ENCODE measurements at regions of chr2 and their contacts with region 1.

Region 1: DNA sequence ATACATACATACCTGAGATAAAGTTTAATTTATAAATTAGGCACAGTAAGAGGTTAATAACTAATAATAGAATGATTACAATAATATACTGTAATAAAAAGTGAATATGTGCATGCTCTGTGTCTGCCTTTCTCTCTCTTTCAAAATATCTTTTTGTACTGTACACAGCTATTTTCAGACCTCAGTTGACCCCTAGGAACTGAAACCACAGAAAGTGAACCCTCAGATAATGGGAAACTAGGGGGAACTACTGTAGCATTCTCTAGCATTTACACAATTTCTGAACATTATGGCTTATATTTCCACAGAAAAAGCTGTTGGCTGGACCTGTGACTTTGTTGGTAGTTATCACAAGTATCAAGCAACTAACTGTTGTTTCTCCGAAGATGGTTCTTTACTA is 25.9 kb downstream of the WDR75 start:
- DNase-seq: no peak
- H3K4me3 ChIP-seq: no peak overlapping the region
- H3K27ac ChIP-seq: no peak overlapping the region
- H3K4me1 ChIP-seq: no peaks in the 10 kb centered on the region
- H3K27me3 ChIP-seq: no peaks in the 10 kb centered on the region
- CTCF ChIP-seq: no peak
- EP300 ChIP-seq: no peak
- POLR2A ChIP-seq: no peak
- RAD21 ChIP-seq: no peak

Region 2: GRCh38 chr2:189454009-189454408 is 13.2 kb before region 1 on chr2:
- CTCF ChIA-PET with region 1: interaction called, 12 read pairs
- POLR2A ChIA-PET with region 1: interaction called, 3 read pairs
- DNase-seq: no peak
- H3K4me3 ChIP-seq: no peak overlapping the region
- H3K27ac ChIP-seq: no peak overlapping the region
- H3K4me1 ChIP-seq: no peaks in the 10 kb centered on the region
- H3K27me3 ChIP-seq: no peaks in the 10 kb centered on the region
- CTCF ChIP-seq: no peak
- EP300 ChIP-seq: no peak
- POLR2A ChIP-seq: no peak
- RAD21 ChIP-seq: no peak